ENCODE measurements at regions of chr12 and their contacts with region 1.

Region 1: GRCh38 chr12:63843721-63844390 is 644 bp upstream of the SRGAP1 start:
- DNase-seq: peak; percentile 90
- CTCF ChIP-seq: peak; percentile 96

Region 2: DNA sequence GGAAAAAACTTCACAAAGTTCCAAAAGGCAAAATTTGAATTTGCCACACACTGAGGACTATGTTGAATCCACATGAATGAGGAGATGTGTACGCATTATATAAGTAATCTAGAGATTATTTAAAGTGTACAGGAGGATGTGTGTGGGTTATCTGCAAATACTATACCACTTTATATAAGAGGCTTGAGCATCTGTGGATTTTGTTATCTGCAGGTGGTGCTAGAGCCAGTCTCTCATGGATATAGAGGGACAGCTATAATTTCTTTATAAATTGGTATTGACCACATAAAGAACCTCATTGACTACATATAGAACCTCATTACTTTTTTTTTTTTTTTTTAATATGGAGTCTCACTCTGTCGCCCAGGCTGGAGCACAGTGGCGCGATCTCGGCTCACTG is 96.3 kb before region 1 on chr12:
- CTCF ChIA-PET with region 1: no interaction called
- POLR2A ChIA-PET with region 1: no interaction called
- DNase-seq: no peak
- CTCF ChIP-seq: no peak

Region 3: DNA sequence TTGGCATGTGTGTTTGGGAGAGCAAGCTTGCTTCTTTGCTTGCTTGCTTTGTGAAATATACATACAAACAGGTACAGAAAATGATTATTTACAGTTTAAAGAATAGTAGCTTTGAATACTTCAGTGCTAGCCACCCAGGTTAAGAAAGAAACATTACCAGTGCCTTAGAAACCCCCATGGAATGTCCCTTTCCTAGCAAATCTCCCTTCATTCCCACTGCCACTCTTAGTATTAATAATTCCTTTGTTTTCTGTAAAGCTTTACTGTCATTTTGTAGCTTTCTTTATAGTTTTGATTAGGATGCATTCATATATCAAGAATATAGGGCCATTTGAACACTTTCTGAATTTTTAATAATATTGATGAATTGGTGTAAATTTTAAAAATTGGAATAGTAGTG is 10.1 kb after region 1 on chr12:
- CTCF ChIA-PET with region 1: interaction called, 29 read pairs
- POLR2A ChIA-PET with region 1: no interaction called
- DNase-seq: no peak
- CTCF ChIP-seq: no peak